ENCODE measurements at regions of chr17 and their contacts with region 1.

Region 1: GRCh38 chr17:69428254-69428980 is 13.9 kb downstream of the MAP2K6 start:
- DNase-seq: no peak
- ATAC-seq: peak in 3 of 4 donors; percentile 36 to 70 (median 54)
- H3K4me3 ChIP-seq: no peak overlapping the region
- H3K27ac ChIP-seq: no peak overlapping the region
- H3K4me1 ChIP-seq: peaks cover 0 to 22% (median 0%) of the 10 kb centered on the region in 12 donors
- H3K27me3 ChIP-seq: no peaks in the 10 kb centered on the region
- CTCF ChIP-seq: no peak
- POLR2A ChIP-seq: no peak

Region 2: GRCh38 chr17:69375229-69375628 is 53.2 kb before region 1 on chr17:
- intact Hi-C with region 1: loop called in 1 of 10 experiments (anchors 5 kb)
- DNase-seq: no peak
- ATAC-seq: no peak
- H3K4me3 ChIP-seq: no peak overlapping the region
- H3K27ac ChIP-seq: no peak overlapping the region
- H3K4me1 ChIP-seq: peaks cover 0 to 7% (median 0%) of the 10 kb centered on the region in 12 donors
- H3K27me3 ChIP-seq: no peaks in the 10 kb centered on the region
- CTCF ChIP-seq: no peak
- POLR2A ChIP-seq: no peak

Region 3: DNA sequence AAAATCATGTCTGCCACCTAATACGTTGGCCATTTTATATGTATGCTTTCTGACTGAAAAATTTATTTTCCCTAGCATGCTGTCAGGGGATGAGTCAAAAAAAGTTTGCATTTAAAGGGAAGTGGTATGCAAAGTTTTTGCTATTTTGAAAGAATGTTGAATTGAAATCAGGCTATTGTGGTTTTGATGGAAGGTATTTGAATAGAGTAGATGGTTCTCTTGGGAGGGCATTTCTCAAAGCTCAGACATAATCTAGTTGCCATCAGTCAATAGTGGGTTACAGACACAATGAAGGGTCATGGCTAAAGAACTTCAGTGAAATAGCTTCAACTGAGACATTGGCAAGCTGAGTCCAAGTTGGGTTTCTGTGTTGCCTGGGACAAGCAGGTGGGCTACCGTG is 88.5 kb after region 1 on chr17:
- intact Hi-C with region 1: loop called in 1 of 10 experiments (anchors 10 kb)
- DNase-seq: no peak
- ATAC-seq: no peak
- H3K4me3 ChIP-seq: no peak overlapping the region
- H3K27ac ChIP-seq: no peak overlapping the region
- H3K4me1 ChIP-seq: no peaks in the 10 kb centered on the region
- H3K27me3 ChIP-seq: no peaks in the 10 kb centered on the region
- CTCF ChIP-seq: no peak
- POLR2A ChIP-seq: no peak

Measured in heart left ventricle (tissue), 16 donors.